Sciatic nerve (tissue), 2 donors: ENCODE measurements at regions of chr7 and their contacts with region 1.

Region 1: GRCh38 chr7:7992506-7992905 is 23.9 kb downstream of the GLCCI1 start:
- DNase-seq: no peak
- ATAC-seq: no peak

Region 2: GRCh38 chr7:7122701-7123281 is 869.7 kb before region 1 on chr7:
- intact Hi-C with region 1: no loop called
- DNase-seq: no peak
- ATAC-seq: peak; percentile 80

Region 3: GRCh38 chr7:7607010-7607409 is 385.5 kb before region 1 on chr7:
- intact Hi-C with region 1: no loop called
- DNase-seq: no peak
- ATAC-seq: no peak

Region 4: GRCh38 chr7:8172372-8173354 is 180.2 kb after region 1 on chr7:
- intact Hi-C with region 1: loop called (anchors 5 kb)
- DNase-seq: no peak
- ATAC-seq: no peak

Region 5: GRCh38 chr7:8353991-8354390 is 361.5 kb after region 1 on chr7:
- intact Hi-C with region 1: no loop called
- DNase-seq: no peak
- ATAC-seq: no peak